ENCODE measurements at regions of chr3 and their contacts with region 1.

Region 1: DNA sequence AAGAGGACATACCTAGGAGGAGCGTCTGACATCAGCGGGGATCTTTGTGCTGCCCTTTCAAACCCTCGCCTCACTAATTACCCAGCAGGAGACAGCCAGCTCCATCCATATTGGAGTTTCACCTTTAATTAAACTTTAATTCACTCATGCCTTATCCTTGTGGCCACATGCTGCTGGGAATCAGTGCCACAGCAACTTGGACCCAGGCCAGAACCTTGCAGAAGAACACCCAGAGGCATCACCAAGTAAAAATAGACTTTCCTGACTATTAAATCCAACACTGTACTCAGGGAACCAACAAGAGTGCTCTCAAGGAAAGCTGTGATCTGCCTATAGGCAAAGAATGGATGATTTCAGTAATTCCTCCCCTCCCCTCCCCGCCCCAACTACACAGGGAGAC is 23.9 kb downstream of the EIF1B start:
- DNase-seq: no peak
- H3K4me3 Mint-ChIP-seq: no peak overlapping the region
- H3K27ac Mint-ChIP-seq: no peak overlapping the region
- H3K4me1 Mint-ChIP-seq: no peaks in the 10 kb centered on the region
- H3K27me3 Mint-ChIP-seq: no peaks in the 10 kb centered on the region
- CTCF ChIP-seq: no peak

Region 2: DNA sequence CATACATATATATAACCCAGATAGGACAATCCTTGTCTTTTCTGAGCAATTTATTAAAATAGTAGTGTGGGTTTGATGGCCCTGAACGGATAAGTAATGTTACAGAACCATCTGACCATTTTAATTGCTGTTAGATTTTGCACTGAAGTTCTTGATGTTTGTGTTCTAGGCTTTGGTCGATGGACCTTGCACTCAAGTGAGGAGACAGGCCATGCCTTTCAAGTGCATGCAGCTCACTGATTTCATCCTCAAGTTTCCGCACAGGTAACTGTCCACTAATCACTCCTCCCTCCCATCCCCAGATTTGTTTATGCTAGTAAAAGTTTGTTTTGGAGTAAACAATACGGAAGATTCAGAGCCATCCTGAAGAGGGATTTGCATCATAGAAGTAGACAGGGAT is 125.1 kb after region 1 on chr3:
- CTCF ChIA-PET with region 1: no interaction called
- intact Hi-C with region 1: loop called (anchors 2 kb)
- DNase-seq: no peak
- H3K4me3 Mint-ChIP-seq: peak overlapping the region; percentile 86
- H3K27ac Mint-ChIP-seq: peak overlapping the region; percentile 78
- H3K4me1 Mint-ChIP-seq: peaks cover 15% of the 10 kb centered on the region
- H3K27me3 Mint-ChIP-seq: no peaks in the 10 kb centered on the region
- CTCF ChIP-seq: no peak

Region 3: DNA sequence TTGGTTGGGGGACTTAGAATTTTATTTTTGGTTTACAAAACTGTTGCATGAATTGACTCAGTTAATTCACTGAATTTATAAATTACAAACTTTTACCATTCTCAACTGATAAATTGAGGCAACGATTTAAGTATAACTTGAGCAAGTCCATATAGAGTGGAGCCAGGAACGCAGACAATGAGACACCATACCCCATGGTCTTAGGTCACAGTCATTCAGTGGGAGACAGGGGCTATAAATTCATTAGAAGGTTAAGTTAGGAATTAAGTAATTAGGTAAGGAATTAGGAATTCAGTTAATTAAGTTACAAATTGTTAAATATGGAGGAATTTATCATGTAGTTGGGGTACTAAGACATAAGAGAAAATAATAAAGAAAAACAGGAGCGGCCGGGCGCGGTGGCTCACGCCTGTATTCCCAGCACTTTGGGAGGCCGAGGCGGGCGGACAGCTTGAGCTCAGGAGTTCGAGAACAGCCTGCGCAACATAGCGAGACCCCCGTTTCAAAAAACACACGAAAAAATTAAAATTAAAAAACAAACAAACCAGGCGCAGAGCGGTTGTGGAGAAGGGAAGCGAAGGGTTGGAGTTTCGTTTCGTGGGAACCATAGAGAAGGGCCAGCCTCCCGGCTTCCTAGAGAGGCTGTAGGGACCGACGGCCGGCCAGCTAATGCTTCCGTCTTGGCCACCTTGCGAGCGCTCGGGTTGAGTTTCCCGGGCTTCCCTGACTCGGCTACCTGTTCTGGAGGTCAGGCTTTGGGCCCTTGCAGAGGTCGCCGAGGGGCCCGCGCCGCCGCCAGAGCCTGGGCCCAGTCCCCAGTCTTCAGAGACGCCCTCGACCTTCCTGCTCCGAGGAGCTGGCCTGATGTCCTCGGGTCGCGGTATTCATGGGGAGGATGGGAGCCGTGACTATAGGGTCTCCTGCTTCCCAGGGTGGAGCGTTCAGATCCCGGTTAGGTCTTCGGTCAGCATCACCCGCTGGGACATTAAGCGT is 143.4 kb after region 1 on chr3 and contains the start of gene ZNF619:
- CTCF ChIA-PET with region 1: no interaction called
- intact Hi-C with region 1: no loop called
- DNase-seq: peak; percentile 62
- H3K4me3 Mint-ChIP-seq: peak within 1 kb of the TSS; percentile 81
- H3K27ac Mint-ChIP-seq: peak within 1 kb of the TSS; percentile 93
- H3K4me1 Mint-ChIP-seq: peaks cover 12% of the 10 kb centered on the region
- H3K27me3 Mint-ChIP-seq: no peaks in the 10 kb centered on the region
- CTCF ChIP-seq: no peak
- total RNA-seq, gene ZNF619: 8.3 and 8.4 TPM in 2 replicates

Region 4: DNA sequence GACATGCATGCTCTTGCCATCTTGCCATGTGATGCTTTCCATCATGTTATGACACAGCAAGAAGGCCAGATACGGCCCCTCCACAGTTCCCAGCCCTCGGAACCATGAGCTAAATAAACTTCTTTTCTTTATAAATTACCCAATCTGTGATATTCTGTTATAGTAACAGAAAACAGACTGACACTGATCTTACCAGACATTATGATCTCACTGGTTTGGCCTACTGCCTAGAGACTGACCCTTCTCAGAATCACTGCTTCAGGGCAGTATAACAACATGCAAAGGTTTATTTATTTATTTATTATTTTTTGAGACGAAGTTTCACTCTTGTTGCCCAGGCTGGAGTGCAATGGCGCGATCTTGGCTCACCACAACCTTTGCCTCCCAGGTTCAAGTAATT is 157.5 kb after region 1 on chr3:
- CTCF ChIA-PET with region 1: no interaction called
- intact Hi-C with region 1: no loop called
- DNase-seq: no peak
- H3K4me3 Mint-ChIP-seq: no peak overlapping the region
- H3K27ac Mint-ChIP-seq: no peak overlapping the region
- H3K4me1 Mint-ChIP-seq: no peaks in the 10 kb centered on the region
- H3K27me3 Mint-ChIP-seq: no peaks in the 10 kb centered on the region
- CTCF ChIP-seq: no peak

Region 5: GRCh38 chr3:40505599-40506462 is 172.4 kb after region 1 on chr3 and contains the start of gene ZNF620:
- CTCF ChIA-PET with region 1: no interaction called
- intact Hi-C with region 1: loop called (anchors 5 kb)
- DNase-seq: peak; percentile 87
- H3K4me3 Mint-ChIP-seq: peak within 1 kb of the TSS; percentile 83
- H3K27ac Mint-ChIP-seq: peak within 1 kb of the TSS; percentile 63
- H3K4me1 Mint-ChIP-seq: no peaks in the 10 kb centered on the region
- H3K27me3 Mint-ChIP-seq: no peaks in the 10 kb centered on the region
- CTCF ChIP-seq: no peak
- total RNA-seq, gene ZNF620: 11.3 and 13.6 TPM in 2 replicates

Region 6: DNA sequence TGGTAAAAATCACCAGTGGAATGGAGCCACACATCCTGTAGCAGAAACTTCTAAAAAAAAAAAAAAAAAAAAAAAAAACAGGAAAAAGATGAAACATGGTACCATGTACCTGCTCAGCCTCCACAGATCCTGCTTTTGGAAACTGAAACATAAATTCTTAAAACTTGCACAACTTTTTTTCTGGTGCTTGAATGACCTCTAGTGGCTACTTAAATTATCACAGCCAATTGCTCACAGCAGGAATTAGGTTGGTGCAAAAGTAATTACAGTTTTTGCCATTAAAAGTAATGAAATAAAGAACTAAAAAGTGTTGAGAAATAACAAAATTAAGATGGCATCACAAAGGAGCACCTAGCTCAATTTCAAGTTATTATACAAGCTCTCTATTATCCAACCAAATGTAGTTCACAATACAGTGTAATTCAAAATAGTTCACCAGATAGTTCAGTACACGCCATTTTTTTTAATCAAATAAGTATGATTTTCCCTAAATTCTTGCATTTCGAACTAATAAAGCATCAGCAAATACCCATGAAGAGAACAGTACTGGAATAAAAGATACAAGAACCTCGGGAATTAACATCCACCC is 1547.9 kb after region 1 on chr3:
- CTCF ChIA-PET with region 1: no interaction called
- intact Hi-C with region 1: loop called (anchors 5 kb)
- DNase-seq: peak; percentile 12
- H3K4me3 Mint-ChIP-seq: no peak overlapping the region
- H3K27ac Mint-ChIP-seq: no peak overlapping the region
- H3K4me1 Mint-ChIP-seq: no peaks in the 10 kb centered on the region
- H3K27me3 Mint-ChIP-seq: no peaks in the 10 kb centered on the region
- CTCF ChIP-seq: peak; percentile 30